Gastrocnemius medialis (tissue), 4 donors: ENCODE measurements at regions of chr15 and their contacts with region 1.

Region 1: GRCh38 chr15:26628879-26629529 is 143.9 kb downstream of the GABRB3 start:
- DNase-seq: peak in 1 of 2 donors; percentile 52
- ATAC-seq: peak in 1 of 2 donors; percentile 64
- H3K4me3 ChIP-seq: peak overlapping the region in 2 of 4 donors; percentile 17 to 24
- H3K27ac ChIP-seq: no peak overlapping the region
- H3K4me1 ChIP-seq: no peaks in the 10 kb centered on the region
- H3K27me3 ChIP-seq: no peaks in the 10 kb centered on the region
- CTCF ChIP-seq: no peak
- POLR2A ChIP-seq: no peak

Region 2: GRCh38 chr15:26537663-26538062 is 91.3 kb before region 1 on chr15:
- in situ Hi-C with region 1: loop called in 1 of 4 experiments (anchors 25 kb)
- intact Hi-C with region 1: no loop called
- DNase-seq: no peak
- ATAC-seq: no peak
- H3K4me3 ChIP-seq: no peak overlapping the region
- H3K27ac ChIP-seq: no peak overlapping the region
- H3K4me1 ChIP-seq: no peaks in the 10 kb centered on the region
- H3K27me3 ChIP-seq: no peaks in the 10 kb centered on the region
- CTCF ChIP-seq: no peak
- POLR2A ChIP-seq: no peak

Region 3: GRCh38 chr15:26686547-26687187 is 57.7 kb after region 1 on chr15:
- in situ Hi-C with region 1: no loop called
- intact Hi-C with region 1: no loop called
- DNase-seq: no peak
- ATAC-seq: no peak
- H3K4me3 ChIP-seq: no peak overlapping the region
- H3K27ac ChIP-seq: no peak overlapping the region
- H3K4me1 ChIP-seq: no peaks in the 10 kb centered on the region
- H3K27me3 ChIP-seq: no peaks in the 10 kb centered on the region
- CTCF ChIP-seq: no peak
- POLR2A ChIP-seq: no peak